SK-N-SH (cell line): ENCODE measurements at regions of chr19 and their contacts with region 1.

Region 1: DNA sequence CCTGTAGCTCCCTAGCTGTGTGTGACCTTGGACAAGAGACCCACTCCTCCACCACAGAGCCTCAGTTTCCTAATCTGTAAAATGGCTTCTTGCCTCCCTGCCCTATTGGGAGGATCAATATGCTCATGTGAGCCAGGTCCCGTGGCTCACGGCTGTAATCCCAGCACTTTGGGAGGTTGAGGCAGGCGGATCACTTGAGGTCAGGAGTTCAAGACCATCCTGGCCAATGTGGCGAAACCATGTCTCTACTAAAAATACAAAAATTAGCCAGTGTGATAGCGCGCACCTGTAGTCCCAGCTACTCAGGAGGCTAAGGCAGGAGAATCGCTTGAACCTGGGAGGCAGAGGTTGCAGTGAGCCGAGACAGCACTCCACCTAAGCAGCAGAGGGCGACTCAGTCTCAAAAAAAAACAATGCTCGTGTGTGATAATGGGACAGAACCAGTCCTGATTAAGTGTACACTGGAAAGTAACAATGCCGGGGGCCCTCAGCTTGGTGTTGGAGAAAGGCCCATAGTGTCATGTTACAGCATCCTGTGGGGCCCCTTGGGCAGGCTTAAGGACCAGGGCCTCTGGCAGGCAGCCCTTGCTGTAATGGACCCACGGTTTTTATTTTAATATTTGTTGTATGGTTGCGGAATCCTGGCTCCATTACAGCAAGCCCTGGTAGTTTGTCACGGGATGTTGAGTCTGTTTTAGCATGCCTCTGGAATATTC is 6.8 kb downstream of the RPS11 start:
- DNase-seq: peak; percentile 64
- H3K4me3 ChIP-seq: no peak overlapping the region
- H3K27ac ChIP-seq: no peak overlapping the region
- H3K4me1 ChIP-seq: peaks cover 3 to 18% of the 10 kb centered on the region in 2 experiments; a peak in 3 of 4 replicates
- H3K27me3 ChIP-seq: no peaks in the 10 kb centered on the region
- CTCF ChIP-seq: peak; percentile 71
- EP300 ChIP-seq: no peak
- RAD21 ChIP-seq: peak; percentile 74

Region 2: DNA sequence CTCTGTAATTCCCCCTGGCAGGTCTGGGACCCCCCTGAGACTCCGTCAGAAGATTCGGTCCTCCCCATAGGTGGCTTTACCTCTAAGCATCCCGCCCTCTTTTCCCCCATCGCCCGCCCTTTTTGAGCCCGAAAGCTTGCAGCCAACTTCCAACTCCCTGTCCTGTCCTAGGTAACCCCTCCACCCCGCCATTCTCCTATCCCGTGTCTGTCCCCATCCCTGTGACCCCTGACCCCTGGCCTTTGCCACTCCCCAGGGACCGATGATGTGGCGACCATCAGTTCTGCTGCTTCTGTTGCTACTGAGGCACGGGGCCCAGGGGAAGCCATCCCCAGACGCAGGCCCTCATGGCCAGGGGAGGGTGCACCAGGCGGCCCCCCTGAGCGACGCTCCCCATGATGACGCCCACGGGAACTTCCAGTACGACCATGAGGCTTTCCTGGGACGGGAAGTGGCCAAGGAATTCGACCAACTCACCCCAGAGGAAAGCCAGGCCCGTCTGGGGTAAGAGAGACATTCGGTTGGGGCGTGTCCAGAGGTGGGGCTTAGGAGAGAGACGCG is 25.3 kb after region 1 on chr19:
- CTCF ChIA-PET with region 1: interaction called, 10 read pairs
- POLR2A ChIA-PET with region 1: interaction called, 3 read pairs
- DNase-seq: no peak
- H3K4me3 ChIP-seq: peak overlapping the region in 1 of 2 experiments; percentile 27; a peak in 1 of 4 replicates
- H3K27ac ChIP-seq: no peak overlapping the region
- H3K4me1 ChIP-seq: peaks cover 0 to 5% of the 10 kb centered on the region in 2 experiments; a peak in 1 of 4 replicates
- H3K27me3 ChIP-seq: no peaks in the 10 kb centered on the region
- CTCF ChIP-seq: no peak
- EP300 ChIP-seq: no peak
- RAD21 ChIP-seq: no peak

Region 3: GRCh38 chr19:49533551-49534488 is 30.8 kb after region 1 on chr19:
- CTCF ChIA-PET with region 1: interaction called, 10 read pairs
- POLR2A ChIA-PET with region 1: interaction called, 3 read pairs
- DNase-seq: peak; percentile 93
- H3K4me3 ChIP-seq: peak overlapping the region; percentile 51 to 71
- H3K27ac ChIP-seq: no peak overlapping the region
- H3K4me1 ChIP-seq: peaks cover 0 to 3% of the 10 kb centered on the region in 2 experiments; a peak in 1 of 4 replicates
- H3K27me3 ChIP-seq: no peaks in the 10 kb centered on the region
- CTCF ChIP-seq: peak; percentile 55
- EP300 ChIP-seq: no peak
- RAD21 ChIP-seq: no peak

Region 4: GRCh38 chr19:49555600-49556411 is 52.8 kb after region 1 on chr19:
- CTCF ChIA-PET with region 1: interaction called, 26 read pairs
- POLR2A ChIA-PET with region 1: no interaction called
- DNase-seq: peak; percentile 95
- H3K4me3 ChIP-seq: no peak overlapping the region
- H3K27ac ChIP-seq: no peak overlapping the region
- H3K4me1 ChIP-seq: no peaks in the 10 kb centered on the region; a peak in 1 of 4 replicates
- H3K27me3 ChIP-seq: no peaks in the 10 kb centered on the region
- CTCF ChIP-seq: no peak
- EP300 ChIP-seq: no peak
- RAD21 ChIP-seq: no peak